ENCODE measurements at regions of chr6 and their contacts with region 1.

Region 1: DNA sequence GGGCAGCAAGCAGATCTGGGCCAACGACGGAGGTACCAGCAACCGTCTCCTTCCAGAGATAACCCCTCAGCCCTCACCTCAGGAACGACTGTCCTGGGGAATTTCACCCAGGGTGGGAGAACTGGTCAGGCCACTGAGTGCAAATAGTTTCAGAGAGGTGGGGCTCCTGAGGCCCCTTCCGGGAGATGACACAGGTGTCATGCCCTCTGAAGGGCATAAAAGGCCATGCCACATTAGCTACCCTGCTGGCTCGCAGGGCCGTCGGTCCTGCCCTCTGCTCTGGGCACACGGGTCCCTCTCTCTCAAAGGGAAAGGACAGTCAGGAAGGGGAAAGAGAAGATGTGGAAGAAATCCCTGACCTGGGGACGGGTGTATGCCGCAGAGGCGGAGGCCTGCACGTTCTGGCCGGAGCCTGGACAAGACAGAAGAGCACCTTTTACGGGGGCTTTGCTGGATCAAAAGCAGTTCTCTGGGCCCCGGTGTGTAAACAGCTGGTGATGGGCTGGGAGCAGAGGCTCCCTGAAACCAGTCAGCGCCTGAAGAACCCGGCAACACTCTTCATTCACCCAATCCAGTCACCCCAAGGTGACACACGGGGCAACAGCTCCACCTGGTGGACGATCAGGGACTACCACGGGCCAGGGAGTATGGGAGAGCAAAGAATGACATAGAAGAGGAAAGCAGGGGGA is 6.4 kb upstream of the TAF8 start:
- DNase-seq: peak; percentile 82
- H3K4me3 ChIP-seq: no peak overlapping the region
- H3K27ac ChIP-seq: no peak overlapping the region
- H3K4me1 ChIP-seq: peaks cover 42% of the 10 kb centered on the region
- H3K27me3 ChIP-seq: no peaks in the 10 kb centered on the region
- CTCF ChIP-seq: peak; percentile 90 to 94
- POLR2A ChIP-seq: no peak

Region 2: DNA sequence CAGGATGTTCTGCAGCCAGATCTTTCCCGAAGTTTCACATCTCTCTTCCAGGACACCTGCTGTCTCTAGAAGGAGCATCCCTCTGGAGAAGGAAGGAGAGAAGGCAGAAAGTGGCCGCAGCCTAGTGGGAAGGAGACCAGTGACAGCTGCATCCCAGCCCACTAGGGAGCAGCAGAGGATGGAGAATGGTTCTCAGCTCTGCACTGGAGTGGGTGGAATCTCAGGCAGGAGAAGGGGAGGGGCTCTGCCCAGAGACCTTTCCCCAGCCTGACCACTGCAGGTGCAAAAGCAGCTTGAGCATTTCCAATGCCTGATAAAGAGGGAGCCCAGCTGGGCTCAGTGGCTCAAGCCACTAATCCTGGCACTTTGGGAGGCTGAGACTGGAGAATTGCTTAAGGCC is 676.2 kb before region 1 on chr6:
- CTCF ChIA-PET with region 1: interaction called, 4 read pairs
- POLR2A ChIA-PET with region 1: no interaction called
- dilution Hi-C with region 1: no loop called
- intact Hi-C with region 1: loop called (anchors 5 kb)
- DNase-seq: peak; percentile 62
- H3K4me3 ChIP-seq: no peak overlapping the region
- H3K27ac ChIP-seq: no peak overlapping the region
- H3K4me1 ChIP-seq: peaks cover 3% of the 10 kb centered on the region
- H3K27me3 ChIP-seq: peaks cover 27 to 46% of the 10 kb centered on the region in 2 experiments
- CTCF ChIP-seq: peak; percentile 50 to 81
- POLR2A ChIP-seq: no peak

Region 3: DNA sequence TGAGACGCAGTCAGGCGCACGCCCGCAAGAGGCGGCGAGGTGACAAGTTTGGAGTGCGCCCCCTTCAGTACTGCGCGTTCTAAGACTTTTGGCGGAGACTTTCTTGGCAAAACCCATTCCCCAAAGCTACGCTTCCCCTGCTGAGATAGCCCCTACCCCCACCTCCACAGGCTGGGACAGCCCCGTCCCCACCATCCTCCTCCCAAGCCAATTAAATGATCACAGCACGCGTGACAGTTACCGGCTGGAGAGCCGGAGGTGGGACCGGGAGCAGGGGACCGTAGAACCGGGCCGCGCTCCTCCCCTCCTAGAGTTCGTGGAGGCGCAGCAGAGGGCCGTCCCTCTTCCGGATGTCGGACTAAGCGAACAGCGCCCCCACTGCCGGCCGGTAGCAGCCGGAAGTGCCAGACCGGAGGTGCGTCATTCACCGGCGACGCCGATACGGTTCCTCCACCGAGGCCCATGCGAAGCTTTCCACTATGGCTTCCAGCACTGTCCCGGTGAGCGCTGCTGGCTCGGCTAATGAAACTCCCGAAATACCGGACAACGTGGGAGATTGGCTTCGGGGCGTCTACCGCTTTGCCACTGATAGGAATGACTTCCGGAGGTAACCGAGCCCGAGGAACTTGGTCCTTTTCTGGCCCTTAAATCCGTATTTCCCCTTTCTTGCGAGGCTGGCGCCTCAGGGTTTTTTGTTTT is 256.6 kb before region 1 on chr6 and contains the start of gene TOMM6:
- CTCF ChIA-PET with region 1: interaction called, 78 read pairs
- POLR2A ChIA-PET with region 1: no interaction called
- dilution Hi-C with region 1: no loop called
- intact Hi-C with region 1: loop called (anchors 1 kb)
- DNase-seq: peak; percentile 97
- H3K4me3 ChIP-seq: peak within 1 kb of the TSS; percentile 78 to 97 (median 94)
- H3K27ac ChIP-seq: peak within 1 kb of the TSS; percentile 80
- H3K4me1 ChIP-seq: peaks cover 10% of the 10 kb centered on the region
- H3K27me3 ChIP-seq: no peaks in the 10 kb centered on the region
- CTCF ChIP-seq: peak; percentile 83 to 84
- POLR2A ChIP-seq: peak; percentile 95
- total RNA-seq, gene TOMM6: 220 and 233 TPM in 2 replicates

Region 4: GRCh38 chr6:41832263-41832662 is 211.7 kb before region 1 on chr6:
- CTCF ChIA-PET with region 1: no interaction called
- POLR2A ChIA-PET with region 1: no interaction called
- dilution Hi-C with region 1: no loop called
- intact Hi-C with region 1: no loop called
- DNase-seq: no peak
- H3K4me3 ChIP-seq: no peak overlapping the region
- H3K27ac ChIP-seq: no peak overlapping the region
- H3K4me1 ChIP-seq: no peaks in the 10 kb centered on the region
- H3K27me3 ChIP-seq: no peaks in the 10 kb centered on the region
- CTCF ChIP-seq: no peak
- POLR2A ChIP-seq: no peak

Region 5: DNA sequence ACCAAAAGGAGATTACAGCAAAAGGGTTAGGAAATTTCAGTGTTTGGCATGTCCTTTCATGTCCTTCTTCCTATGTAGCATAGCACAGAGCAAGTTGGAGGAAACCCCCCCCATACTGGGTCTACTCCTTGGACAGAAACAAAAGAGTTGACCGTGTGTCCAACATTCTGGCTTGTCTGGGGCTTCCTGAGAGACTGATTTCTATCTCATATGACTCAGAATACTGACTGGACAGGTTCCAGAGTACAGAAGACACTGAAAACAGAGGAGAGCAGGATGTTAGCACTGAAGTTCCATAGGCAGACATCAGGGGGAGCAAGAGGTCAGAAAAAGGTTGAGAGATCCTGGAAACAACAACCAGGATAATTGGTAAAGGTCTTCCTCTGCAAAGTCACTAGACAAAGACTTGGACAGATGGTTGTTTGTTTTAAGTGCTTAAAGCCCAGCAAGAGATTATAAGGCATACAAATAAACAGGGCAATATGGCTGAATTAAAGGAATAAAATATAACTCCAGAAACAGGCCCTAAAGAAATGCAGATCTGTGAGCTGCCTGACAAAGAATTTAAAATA is 197.2 kb before region 1 on chr6:
- CTCF ChIA-PET with region 1: interaction called, 40 read pairs
- POLR2A ChIA-PET with region 1: no interaction called
- dilution Hi-C with region 1: no loop called
- intact Hi-C with region 1: loop called (anchors 1 kb)
- DNase-seq: peak; percentile 99
- H3K4me3 ChIP-seq: peak overlapping the region in 1 of 3 experiments; percentile 16
- H3K27ac ChIP-seq: peak overlapping the region; percentile 96
- H3K4me1 ChIP-seq: peaks cover 17% of the 10 kb centered on the region
- H3K27me3 ChIP-seq: no peaks in the 10 kb centered on the region
- CTCF ChIP-seq: peak; percentile 79 to 85
- POLR2A ChIP-seq: peak; percentile 46

Region 6: GRCh38 chr6:41901882-41902519 is 141.9 kb before region 1 on chr6:
- CTCF ChIA-PET with region 1: interaction called, 4 read pairs
- POLR2A ChIA-PET with region 1: no interaction called
- dilution Hi-C with region 1: no loop called
- intact Hi-C with region 1: loop called (anchors 1 kb)
- DNase-seq: no peak
- H3K4me3 ChIP-seq: no peak overlapping the region
- H3K27ac ChIP-seq: no peak overlapping the region
- H3K4me1 ChIP-seq: no peaks in the 10 kb centered on the region
- H3K27me3 ChIP-seq: no peaks in the 10 kb centered on the region
- CTCF ChIP-seq: peak; percentile 19 to 30
- POLR2A ChIP-seq: no peak

Region 7: DNA sequence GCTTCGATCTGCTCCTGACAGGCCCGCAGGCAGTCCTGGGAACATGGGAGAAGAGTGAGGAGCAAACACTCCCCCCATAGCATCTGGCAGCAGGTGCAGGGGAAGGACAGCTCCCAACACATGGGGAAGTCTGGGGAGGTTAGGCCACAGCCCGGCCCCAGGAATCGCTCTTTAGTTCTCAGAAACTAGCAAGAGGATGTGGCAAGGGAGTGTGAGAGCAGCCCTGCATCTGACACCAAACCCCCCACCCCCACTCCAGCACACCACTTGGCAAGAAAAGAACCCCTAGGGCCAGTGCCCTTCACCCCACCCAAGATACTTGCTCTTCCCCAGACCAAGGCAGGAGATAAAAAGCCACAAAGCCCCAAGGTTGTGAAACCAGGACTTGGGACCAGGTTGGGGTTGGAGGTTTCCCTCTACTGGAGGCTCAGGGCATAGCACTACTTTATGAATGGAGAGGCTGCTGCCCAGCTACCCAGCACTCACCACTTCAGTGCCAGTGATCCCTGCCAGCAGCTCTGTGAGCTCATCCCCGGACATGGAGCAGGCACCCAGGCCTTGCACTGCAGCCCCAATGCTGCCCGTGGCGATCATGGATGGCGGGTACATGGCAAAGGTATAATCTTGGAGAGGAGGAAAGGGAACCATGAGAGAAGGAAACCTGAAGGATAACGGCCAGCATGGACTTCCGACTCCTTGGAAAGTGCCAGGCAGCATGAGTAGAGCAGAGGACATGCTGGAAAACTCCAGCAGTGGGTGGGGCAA is 107.7 kb before region 1 on chr6:
- CTCF ChIA-PET with region 1: interaction called, 149 read pairs
- POLR2A ChIA-PET with region 1: interaction called, 3 read pairs
- dilution Hi-C with region 1: no loop called
- intact Hi-C with region 1: loop called (anchors 1 kb)
- DNase-seq: peak; percentile 82
- H3K4me3 ChIP-seq: no peak overlapping the region
- H3K27ac ChIP-seq: no peak overlapping the region
- H3K4me1 ChIP-seq: peaks cover 27% of the 10 kb centered on the region
- H3K27me3 ChIP-seq: no peaks in the 10 kb centered on the region
- CTCF ChIP-seq: peak; percentile 84 to 86
- POLR2A ChIP-seq: no peak

Region 8: DNA sequence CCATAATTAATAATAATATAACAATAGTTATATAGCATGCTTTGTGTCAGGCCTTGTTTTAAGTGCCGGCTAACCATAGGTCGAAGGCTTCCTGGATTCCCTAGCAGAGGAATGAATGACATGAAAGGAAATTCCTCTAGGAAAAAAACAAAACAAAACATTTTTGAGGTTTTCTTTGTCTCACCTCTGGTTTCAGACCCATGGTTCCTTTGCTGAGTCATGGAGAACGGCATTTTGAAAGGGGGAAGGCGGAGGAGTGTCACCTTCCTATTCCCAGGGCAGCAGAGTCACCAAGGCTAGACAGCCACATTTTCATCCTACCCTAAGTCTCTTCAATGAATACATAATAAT is 77.0 kb before region 1 on chr6:
- CTCF ChIA-PET with region 1: interaction called, 5 read pairs
- POLR2A ChIA-PET with region 1: interaction called, 5 read pairs
- dilution Hi-C with region 1: no loop called
- intact Hi-C with region 1: loop called (anchors 2 kb)
- DNase-seq: peak; percentile 76
- H3K4me3 ChIP-seq: no peak overlapping the region
- H3K27ac ChIP-seq: peak overlapping the region; percentile 58
- H3K4me1 ChIP-seq: peaks cover 38% of the 10 kb centered on the region
- H3K27me3 ChIP-seq: no peaks in the 10 kb centered on the region
- CTCF ChIP-seq: no peak
- POLR2A ChIP-seq: peak; percentile 15

Region 9: GRCh38 chr6:42068872-42069523 is 25.1 kb after region 1 on chr6:
- CTCF ChIA-PET with region 1: no interaction called
- POLR2A ChIA-PET with region 1: no interaction called
- dilution Hi-C with region 1: no loop called
- intact Hi-C with region 1: no loop called
- DNase-seq: no peak
- H3K4me3 ChIP-seq: no peak overlapping the region
- H3K27ac ChIP-seq: no peak overlapping the region
- H3K4me1 ChIP-seq: no peaks in the 10 kb centered on the region
- H3K27me3 ChIP-seq: no peaks in the 10 kb centered on the region
- CTCF ChIP-seq: no peak
- POLR2A ChIP-seq: no peak